H1 (cell line): ENCODE measurements at regions of chr15 and their contacts with region 1.

Region 1: DNA sequence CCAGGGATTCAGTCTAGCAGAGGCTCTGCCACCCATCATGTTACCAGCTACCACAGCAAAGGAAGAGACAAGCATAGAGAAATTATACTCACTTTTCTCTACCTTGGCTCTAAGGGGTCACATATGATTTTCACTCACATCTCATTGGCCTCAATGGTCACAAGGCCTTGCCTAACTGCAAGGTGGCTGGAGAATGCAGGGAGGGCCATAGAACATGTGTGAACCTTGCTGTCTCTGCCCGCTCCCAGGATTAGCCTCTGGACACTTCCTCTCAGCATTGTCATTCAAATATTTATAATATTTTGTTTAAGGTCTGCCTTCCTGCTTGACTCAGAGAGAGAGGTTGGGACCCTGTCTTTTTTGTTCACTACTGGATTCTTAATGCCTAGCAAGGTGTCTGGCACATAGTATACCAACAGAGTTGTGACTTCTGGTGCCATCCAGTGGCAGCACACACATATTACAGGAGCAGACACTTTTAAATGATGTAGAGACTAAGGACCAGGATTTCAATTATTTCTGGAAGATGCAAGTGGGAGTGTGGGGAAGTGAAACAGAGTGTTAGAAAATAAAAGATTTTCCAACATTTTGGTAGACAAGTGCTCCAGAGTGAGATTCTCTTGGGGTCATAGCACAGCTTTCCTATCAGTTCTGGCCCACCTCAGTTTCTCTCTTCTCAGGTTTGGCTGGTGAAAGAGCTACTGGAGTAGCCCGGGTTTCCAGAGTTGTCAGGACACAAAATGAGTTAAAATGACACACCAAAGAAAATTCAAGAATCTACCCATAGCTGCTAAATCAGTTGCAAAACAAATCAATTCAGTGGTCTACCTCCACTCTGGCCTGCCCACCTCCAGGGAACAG is 119.0 kb upstream of the RASGRP1 start:
- DNase-seq: peak in 1 of 2 experiments; percentile 58
- H3K4me3 ChIP-seq: no peak overlapping the region
- H3K27ac ChIP-seq: no peak overlapping the region
- H3K4me1 ChIP-seq: peaks cover 0 to 1% (median 0%) of the 10 kb centered on the region in 4 experiments; a peak in 1 of 7 replicates
- H3K27me3 ChIP-seq: no peaks in the 10 kb centered on the region
- CTCF ChIP-seq: peak in 2 of 3 experiments; percentile 70 to 81; a peak in 3 of 4 replicates
- EP300 ChIP-seq: no peak
- POLR2A ChIP-seq: no peak
- RAD21 ChIP-seq: peak; percentile 85 to 89

Region 2: DNA sequence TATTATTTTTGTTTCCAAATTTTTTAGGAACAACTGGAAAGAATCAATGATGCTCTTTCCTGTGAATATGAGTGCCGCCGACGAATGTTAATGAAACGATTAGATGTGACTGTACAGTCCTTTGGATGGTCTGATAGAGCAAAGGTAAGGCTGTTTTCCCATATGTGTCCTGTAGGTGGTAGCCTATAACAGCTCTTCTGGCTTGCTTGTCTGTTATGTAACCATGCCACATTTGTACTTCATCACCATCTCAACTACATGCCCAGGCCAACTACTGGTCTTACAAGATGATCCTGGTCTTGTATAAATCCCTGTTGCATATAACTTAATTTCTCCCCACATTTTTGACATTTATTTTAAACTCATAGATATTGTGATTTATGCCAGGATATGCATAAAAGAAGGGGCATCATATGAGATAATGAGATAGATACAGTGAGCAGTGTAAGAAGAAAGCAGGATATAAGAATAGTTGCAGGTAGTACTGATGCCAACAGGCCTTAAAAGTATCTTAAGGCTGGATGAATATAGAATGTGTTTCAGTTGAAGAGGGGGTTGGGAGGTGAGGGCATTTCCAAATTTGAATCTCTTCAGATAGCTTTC is 209.4 kb before region 1 on chr15:
- CTCF ChIA-PET with region 1: interaction called, 18 read pairs
- POLR2A ChIA-PET with region 1: no interaction called
- DNase-seq: no peak
- H3K4me3 ChIP-seq: no peak overlapping the region
- H3K27ac ChIP-seq: no peak overlapping the region
- H3K4me1 ChIP-seq: no peaks in the 10 kb centered on the region
- H3K27me3 ChIP-seq: no peaks in the 10 kb centered on the region
- CTCF ChIP-seq: peak in 2 of 3 experiments; percentile 58 to 71; a peak in 3 of 4 replicates
- EP300 ChIP-seq: no peak
- POLR2A ChIP-seq: no peak
- RAD21 ChIP-seq: peak; percentile 82 to 86

Region 3: GRCh38 chr15:38631126-38632075 is 52.2 kb before region 1 on chr15:
- CTCF ChIA-PET with region 1: interaction called, 10 read pairs
- POLR2A ChIA-PET with region 1: no interaction called
- DNase-seq: no peak
- H3K4me3 ChIP-seq: no peak overlapping the region
- H3K27ac ChIP-seq: no peak overlapping the region
- H3K4me1 ChIP-seq: no peaks in the 10 kb centered on the region
- H3K27me3 ChIP-seq: no peaks in the 10 kb centered on the region
- CTCF ChIP-seq: no peak
- EP300 ChIP-seq: no peak
- POLR2A ChIP-seq: no peak
- RAD21 ChIP-seq: no peak

Region 4: GRCh38 chr15:38647683-38648082 is 35.9 kb before region 1 on chr15:
- CTCF ChIA-PET with region 1: interaction called, 12 read pairs
- POLR2A ChIA-PET with region 1: no interaction called
- DNase-seq: no peak
- H3K4me3 ChIP-seq: no peak overlapping the region
- H3K27ac ChIP-seq: no peak overlapping the region
- H3K4me1 ChIP-seq: peaks cover 0 to 1% (median 0%) of the 10 kb centered on the region in 4 experiments; a peak in 1 of 7 replicates
- H3K27me3 ChIP-seq: no peaks in the 10 kb centered on the region
- CTCF ChIP-seq: peak in 2 of 3 experiments; percentile 41 to 44; a peak in 3 of 4 replicates
- EP300 ChIP-seq: no peak
- POLR2A ChIP-seq: no peak
- RAD21 ChIP-seq: peak; percentile 50 to 54

Region 5: GRCh38 chr15:38660738-38661137 is 22.9 kb before region 1 on chr15:
- CTCF ChIA-PET with region 1: interaction called, 19 read pairs
- POLR2A ChIA-PET with region 1: no interaction called
- DNase-seq: no peak
- H3K4me3 ChIP-seq: no peak overlapping the region
- H3K27ac ChIP-seq: no peak overlapping the region
- H3K4me1 ChIP-seq: no peaks in the 10 kb centered on the region
- H3K27me3 ChIP-seq: no peaks in the 10 kb centered on the region
- CTCF ChIP-seq: no peak
- EP300 ChIP-seq: no peak
- POLR2A ChIP-seq: no peak
- RAD21 ChIP-seq: no peak

Region 6: DNA sequence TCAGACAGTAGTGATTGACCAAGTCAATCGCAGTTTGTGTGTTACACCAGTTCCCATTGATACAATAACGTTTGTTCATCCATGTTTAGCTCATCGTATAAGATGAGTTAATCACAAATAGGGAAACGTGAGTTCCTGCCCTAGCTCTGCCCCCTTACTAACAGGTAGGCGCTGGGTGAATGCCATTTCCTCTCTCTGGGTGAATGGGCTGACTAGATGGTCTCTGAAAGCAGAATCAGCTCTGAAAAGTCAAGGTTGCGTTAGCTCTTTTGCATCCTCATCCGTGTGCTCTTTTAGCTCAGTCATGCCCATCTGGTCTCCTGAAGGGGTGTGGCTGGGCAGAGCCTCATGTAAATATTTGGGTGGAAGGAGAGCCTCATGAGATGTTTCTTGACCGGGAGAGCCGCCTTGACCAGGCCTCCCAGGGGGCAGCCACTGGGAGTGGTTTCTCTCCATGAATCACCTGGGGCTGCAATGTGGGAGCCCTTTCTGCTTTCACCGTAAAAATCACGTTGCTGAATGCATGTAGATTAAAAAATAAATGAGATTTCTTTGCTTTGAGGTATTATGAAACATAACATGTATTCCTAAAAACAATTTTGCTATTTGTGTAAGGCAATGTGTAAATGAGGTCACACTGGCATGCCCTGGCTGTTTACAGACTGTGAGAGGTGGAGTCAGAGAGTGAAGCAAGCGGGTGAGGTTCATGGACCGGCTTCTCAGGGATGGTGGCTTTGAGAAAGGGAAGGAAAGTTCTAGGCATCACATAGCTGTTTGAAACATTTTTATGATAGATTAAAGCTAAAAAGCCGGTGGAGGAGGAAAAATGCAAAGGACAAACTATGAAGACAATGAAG is 10.6 kb before region 1 on chr15:
- CTCF ChIA-PET with region 1: interaction called, 20 read pairs
- POLR2A ChIA-PET with region 1: no interaction called
- DNase-seq: no peak
- H3K4me3 ChIP-seq: no peak overlapping the region
- H3K27ac ChIP-seq: no peak overlapping the region
- H3K4me1 ChIP-seq: peaks cover 0 to 5% (median 2%) of the 10 kb centered on the region in 4 experiments; a peak in 2 of 7 replicates
- H3K27me3 ChIP-seq: peaks cover 0 to under 1% (median 0%) of the 10 kb centered on the region in 4 experiments; a peak in 1 of 7 replicates
- CTCF ChIP-seq: no peak
- EP300 ChIP-seq: no peak
- POLR2A ChIP-seq: no peak
- RAD21 ChIP-seq: no peak

Region 7: DNA sequence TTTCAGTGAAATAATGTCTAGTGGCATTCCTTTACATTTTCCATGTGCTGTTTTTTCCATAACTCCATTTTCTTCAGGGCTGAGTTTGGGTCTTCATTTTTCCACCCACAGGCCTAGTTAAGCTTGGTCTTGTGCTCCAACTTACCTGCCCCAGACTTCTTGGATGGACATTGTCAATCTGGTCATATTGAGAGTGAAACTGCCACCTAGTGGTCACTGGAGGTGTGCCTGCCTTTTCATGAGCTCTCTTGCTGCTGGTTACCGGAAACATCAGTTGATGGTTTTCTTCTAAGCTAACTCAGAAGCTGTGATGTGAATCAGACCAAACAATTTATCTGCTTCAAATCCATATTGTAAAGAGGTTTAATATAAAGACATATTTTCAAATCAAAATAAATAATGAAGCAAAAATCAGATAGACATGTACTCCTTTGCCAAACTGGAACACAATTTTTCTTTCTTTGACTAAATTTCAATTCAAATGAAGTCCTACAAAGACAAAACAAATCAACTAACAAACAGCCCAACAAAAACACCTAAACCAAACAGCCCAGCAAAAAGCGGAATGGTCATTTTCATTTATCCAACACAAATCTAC is 16.1 kb after region 1 on chr15:
- CTCF ChIA-PET with region 1: interaction called, 72 read pairs
- POLR2A ChIA-PET with region 1: interaction called, 3 read pairs
- DNase-seq: peak in 1 of 2 experiments; percentile 63
- H3K4me3 ChIP-seq: no peak overlapping the region
- H3K27ac ChIP-seq: no peak overlapping the region
- H3K4me1 ChIP-seq: peaks cover 0 to 6% (median 3%) of the 10 kb centered on the region in 4 experiments; a peak in 4 of 7 replicates
- H3K27me3 ChIP-seq: no peaks in the 10 kb centered on the region; a peak in 1 of 7 replicates
- CTCF ChIP-seq: peak; percentile 62 to 93 (median 71)
- EP300 ChIP-seq: no peak
- POLR2A ChIP-seq: no peak
- RAD21 ChIP-seq: peak; percentile 66 to 71

Region 8: GRCh38 chr15:38761681-38762080 is 78.1 kb after region 1 on chr15:
- CTCF ChIA-PET with region 1: no interaction called
- POLR2A ChIA-PET with region 1: no interaction called
- DNase-seq: no peak
- H3K4me3 ChIP-seq: no peak overlapping the region
- H3K27ac ChIP-seq: no peak overlapping the region
- H3K4me1 ChIP-seq: no peaks in the 10 kb centered on the region
- H3K27me3 ChIP-seq: no peaks in the 10 kb centered on the region
- CTCF ChIP-seq: no peak
- EP300 ChIP-seq: no peak
- POLR2A ChIP-seq: no peak
- RAD21 ChIP-seq: no peak

Region 9: GRCh38 chr15:38828031-38828532 is 144.5 kb after region 1 on chr15:
- CTCF ChIA-PET with region 1: no interaction called
- POLR2A ChIA-PET with region 1: no interaction called
- DNase-seq: no peak
- H3K4me3 ChIP-seq: no peak overlapping the region
- H3K27ac ChIP-seq: no peak overlapping the region
- H3K4me1 ChIP-seq: no peaks in the 10 kb centered on the region
- H3K27me3 ChIP-seq: no peaks in the 10 kb centered on the region
- CTCF ChIP-seq: no peak
- EP300 ChIP-seq: no peak
- POLR2A ChIP-seq: no peak
- RAD21 ChIP-seq: no peak